HEK293 (cell line): ENCODE measurements at regions of chr2 and their contacts with region 1.

Region 1: GRCh38 chr2:32039447-32040219 is at the start of gene DPY30:
- H3K4me3 ChIP-seq: peak within 1 kb of the TSS; percentile 82
- H3K27ac ChIP-seq: peak within 1 kb of the TSS; percentile 74
- H3K4me1 ChIP-seq: no peaks in the 10 kb centered on the region
- CTCF ChIP-seq: peak; percentile 72

Region 2: DNA sequence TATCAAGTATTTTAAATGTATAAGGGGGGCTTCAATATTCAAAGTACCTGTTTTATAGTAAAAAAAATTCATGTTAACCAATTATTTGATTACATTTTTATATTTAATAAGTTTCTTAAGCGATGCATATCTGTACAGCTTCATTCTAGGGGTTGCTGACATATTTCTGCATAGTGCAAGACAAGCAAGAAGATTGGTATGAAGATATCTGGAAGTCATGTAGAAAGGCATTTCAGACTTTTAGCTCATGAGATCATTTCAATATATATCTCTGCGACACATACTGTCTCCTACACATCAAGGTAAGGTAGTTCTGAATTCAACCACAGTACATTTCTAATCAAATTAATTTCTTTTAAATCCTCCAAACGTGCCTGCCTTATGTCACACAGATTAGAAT is 101.9 kb before region 1 on chr2:
- CTCF ChIA-PET with region 1: no interaction called
- POLR2A ChIA-PET with region 1: no interaction called
- H3K4me3 ChIP-seq: no peak overlapping the region
- H3K27ac ChIP-seq: no peak overlapping the region
- H3K4me1 ChIP-seq: no peaks in the 10 kb centered on the region
- CTCF ChIP-seq: no peak

Region 3: DNA sequence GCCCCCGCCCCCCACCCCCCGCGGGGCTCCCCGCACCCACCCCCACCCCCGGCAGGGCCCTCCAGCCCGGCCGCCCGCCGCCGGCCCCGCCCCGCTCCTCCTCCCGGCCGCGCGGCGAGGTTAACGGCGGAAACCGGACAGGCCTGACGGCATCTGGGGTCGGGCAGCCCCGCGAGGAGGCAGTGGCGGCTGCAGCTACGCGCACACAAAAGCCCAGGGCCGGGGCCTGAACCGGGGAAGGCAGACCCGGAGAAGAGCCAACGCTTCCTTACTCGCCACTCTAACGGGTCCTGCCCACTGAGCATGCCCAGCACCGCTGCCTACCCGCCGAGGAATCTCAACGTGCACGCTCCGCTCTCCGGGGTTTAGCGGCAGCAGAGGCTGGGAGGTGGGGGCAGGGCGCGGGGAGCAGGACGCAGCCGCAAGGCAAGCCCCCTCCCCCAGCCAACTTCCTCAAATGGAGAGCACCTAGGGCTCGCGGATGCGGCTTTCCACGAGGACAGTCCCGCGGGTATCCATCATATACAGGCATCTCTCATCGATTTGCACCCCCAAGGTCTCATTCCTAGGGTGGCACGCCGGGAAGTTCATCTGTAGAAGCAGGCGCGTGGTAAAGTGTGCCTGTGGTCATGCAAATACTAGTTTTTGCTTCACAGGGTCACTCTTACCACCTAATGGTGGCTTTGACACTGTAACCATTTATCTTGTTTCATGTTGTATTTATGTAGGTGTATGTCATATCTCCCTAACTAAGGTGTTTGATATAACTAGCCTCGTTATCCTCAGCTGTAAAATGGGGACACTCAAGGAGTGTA is 28.8 kb before region 1 on chr2 and contains the start of gene MEMO1:
- CTCF ChIA-PET with region 1: no interaction called
- POLR2A ChIA-PET with region 1: interaction called, 14 read pairs
- H3K4me3 ChIP-seq: peak within 1 kb of the TSS; percentile 90
- H3K27ac ChIP-seq: peak within 1 kb of the TSS; percentile 86
- H3K4me1 ChIP-seq: no peaks in the 10 kb centered on the region
- CTCF ChIP-seq: peak; percentile 69

Region 4: DNA sequence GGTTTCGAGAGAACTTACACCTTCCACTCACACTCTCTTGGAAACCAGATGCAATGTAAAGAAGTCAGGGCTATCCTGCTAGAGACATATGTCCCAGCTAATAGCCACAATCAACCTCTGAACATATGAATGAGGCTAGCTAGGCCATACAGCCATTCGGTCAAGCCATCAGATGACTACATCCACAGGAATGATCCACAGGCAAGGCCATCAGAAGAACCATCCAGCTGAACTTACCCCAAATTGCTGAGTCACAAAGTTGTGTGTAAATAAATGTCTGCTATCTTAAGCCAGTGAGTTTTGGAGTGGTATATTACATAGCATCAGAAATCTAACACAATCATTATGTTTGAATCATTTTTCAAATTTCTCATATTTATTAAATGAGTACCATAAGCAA is 18.5 kb after region 1 on chr2:
- CTCF ChIA-PET with region 1: no interaction called
- POLR2A ChIA-PET with region 1: interaction called, 104 read pairs
- H3K4me3 ChIP-seq: no peak overlapping the region
- H3K27ac ChIP-seq: no peak overlapping the region
- H3K4me1 ChIP-seq: no peaks in the 10 kb centered on the region
- CTCF ChIP-seq: no peak

Region 5: GRCh38 chr2:32166115-32166574 is 126.5 kb after region 1 on chr2:
- CTCF ChIA-PET with region 1: no interaction called
- POLR2A ChIA-PET with region 1: interaction called, 27 read pairs
- H3K4me3 ChIP-seq: peak overlapping the region; percentile 80
- H3K27ac ChIP-seq: 0 out of 2 replicates have a peak overlapping the region, but pooled peaks have one; percentile 12
- H3K4me1 ChIP-seq: no peaks in the 10 kb centered on the region
- CTCF ChIP-seq: no peak